ENCODE measurements at regions of chr7 and their contacts with region 1.

Region 1: GRCh38 chr7:63953181-63953580 is 45.5 kb upstream of the ZNF722 start:
- DNase-seq: no peak
- H3K4me3 ChIP-seq: no peak overlapping the region
- H3K27ac ChIP-seq: no peak overlapping the region
- H3K4me1 ChIP-seq: no peaks in the 10 kb centered on the region
- H3K27me3 ChIP-seq: no peaks in the 10 kb centered on the region
- CTCF ChIP-seq: no peak
- POLR2A ChIP-seq: no peak

Region 2: DNA sequence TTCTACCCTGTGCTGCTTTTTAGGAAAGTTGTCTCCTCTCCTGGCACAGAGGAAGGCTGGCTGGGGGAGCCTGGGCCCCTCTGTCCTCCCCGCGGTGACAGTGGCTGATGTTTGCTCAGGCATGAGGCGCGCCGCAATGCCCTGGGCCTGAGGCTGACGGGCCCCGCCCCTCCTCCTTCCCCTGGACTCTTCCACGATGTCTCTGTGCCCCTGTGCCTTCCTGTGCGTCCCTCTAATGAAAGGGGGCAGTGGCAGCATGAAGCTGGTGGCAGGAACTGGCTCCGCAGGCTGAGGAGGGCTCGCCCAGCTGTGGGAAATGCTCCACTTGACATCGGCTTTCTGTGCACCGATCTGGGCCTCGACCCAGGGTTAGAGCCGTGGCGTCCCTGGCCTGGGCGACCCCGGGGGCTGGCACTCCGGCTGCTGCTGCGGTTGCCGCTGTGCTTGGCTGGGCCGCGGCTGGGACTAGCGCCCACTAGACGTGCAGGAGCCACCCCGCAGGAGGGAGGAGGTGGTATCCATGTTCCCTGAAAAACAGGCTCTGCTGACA is 541.8 kb after region 1 on chr7:
- intact Hi-C with region 1: loop called (anchors 5 kb)
- DNase-seq: no peak
- H3K4me3 ChIP-seq: peak overlapping the region; percentile 10 to 15
- H3K27ac ChIP-seq: no peak overlapping the region
- H3K4me1 ChIP-seq: no peaks in the 10 kb centered on the region
- H3K27me3 ChIP-seq: no peaks in the 10 kb centered on the region
- CTCF ChIP-seq: no peak
- POLR2A ChIP-seq: no peak